CD4-positive, alpha-beta T cell (primary cell): ENCODE measurements at regions of chr17 and their contacts with region 1.

Region 1: GRCh38 chr17:15213381-15214087 is 51.6 kb downstream of the PMP22 start:
- DNase-seq: no peak
- ATAC-seq: no peak
- H3K4me3 ChIP-seq: no peak overlapping the region
- H3K4me3 Mint-ChIP-seq: no peak overlapping the region
- H3K27ac ChIP-seq: no peak overlapping the region
- H3K27ac Mint-ChIP-seq: no peak overlapping the region
- H3K4me1 ChIP-seq: no peaks in the 10 kb centered on the region
- H3K4me1 Mint-ChIP-seq: no peaks in the 10 kb centered on the region
- H3K27me3 ChIP-seq: no peaks in the 10 kb centered on the region
- H3K27me3 Mint-ChIP-seq: peaks cover 25% of the 10 kb centered on the region
- CTCF ChIP-seq: no peak

Region 2: DNA sequence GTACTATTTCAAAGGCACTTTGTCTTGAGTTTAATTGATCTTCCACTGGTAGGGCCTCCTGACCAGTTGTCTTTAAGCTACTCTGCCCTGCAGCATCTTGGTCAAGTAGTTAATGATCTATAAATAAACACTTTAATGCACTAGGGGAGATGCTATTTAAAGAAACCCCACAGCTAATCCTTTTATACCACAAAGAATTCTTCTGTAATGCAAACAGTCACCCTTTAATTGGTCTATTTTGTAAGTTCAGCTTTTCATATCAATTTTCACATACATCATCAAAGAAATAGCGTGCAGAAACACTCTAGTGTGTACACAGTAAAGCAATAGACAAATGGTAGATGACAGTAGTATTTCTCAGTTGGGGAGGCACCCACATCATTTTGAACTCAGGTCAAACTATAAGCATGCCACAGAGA is 18.7 kb before region 1 on chr17:
- CTCF ChIA-PET with region 1: no interaction called
- POLR2A ChIA-PET with region 1: no interaction called
- intact Hi-C with region 1: no loop called
- DNase-seq: no peak
- ATAC-seq: no peak
- H3K4me3 ChIP-seq: no peak overlapping the region
- H3K4me3 Mint-ChIP-seq: no peak overlapping the region
- H3K27ac ChIP-seq: no peak overlapping the region
- H3K27ac Mint-ChIP-seq: no peak overlapping the region
- H3K4me1 ChIP-seq: no peaks in the 10 kb centered on the region
- H3K4me1 Mint-ChIP-seq: no peaks in the 10 kb centered on the region
- H3K27me3 ChIP-seq: peaks cover 4 to 7% of the 10 kb centered on the region in 2 experiments
- H3K27me3 Mint-ChIP-seq: peaks cover 29% of the 10 kb centered on the region
- CTCF ChIP-seq: no peak

Region 3: GRCh38 chr17:15273141-15273793 is 59.7 kb after region 1 on chr17:
- CTCF ChIA-PET with region 1: no interaction called
- POLR2A ChIA-PET with region 1: no interaction called
- intact Hi-C with region 1: loop called in 1 of 2 experiments (anchors 10 kb)
- DNase-seq: no peak
- ATAC-seq: no peak
- H3K4me3 ChIP-seq: no peak overlapping the region
- H3K4me3 Mint-ChIP-seq: no peak overlapping the region
- H3K27ac ChIP-seq: no peak overlapping the region
- H3K27ac Mint-ChIP-seq: no peak overlapping the region
- H3K4me1 ChIP-seq: no peaks in the 10 kb centered on the region
- H3K4me1 Mint-ChIP-seq: no peaks in the 10 kb centered on the region
- H3K27me3 ChIP-seq: peaks cover 0 to 5% of the 10 kb centered on the region in 2 experiments
- H3K27me3 Mint-ChIP-seq: peaks cover 5% of the 10 kb centered on the region
- CTCF ChIP-seq: no peak